ENCODE measurements at regions of chr1 and their contacts with region 1.

Region 1: GRCh38 chr1:203290261-203291089 is 14.8 kb upstream of the BTG2 start:
- DNase-seq: peak; percentile 99
- H3K4me3 Mint-ChIP-seq: peak overlapping the region; percentile 82
- H3K27ac Mint-ChIP-seq: peak overlapping the region; percentile 100
- H3K4me1 Mint-ChIP-seq: peaks cover 76% of the 10 kb centered on the region
- H3K27me3 Mint-ChIP-seq: peaks cover 2% of the 10 kb centered on the region

Region 2: GRCh38 chr1:203273206-203273868 is 17.1 kb before region 1 on chr1:
- CTCF ChIA-PET with region 1: interaction called, 356 read pairs
- POLR2A ChIA-PET with region 1: interaction called, 51 read pairs
- intact Hi-C with region 1: loop called (anchors 1 kb)
- DNase-seq: peak; percentile 95
- H3K4me3 Mint-ChIP-seq: peak overlapping the region; percentile 63
- H3K27ac Mint-ChIP-seq: peak overlapping the region; percentile 72
- H3K4me1 Mint-ChIP-seq: peaks cover 64% of the 10 kb centered on the region
- H3K27me3 Mint-ChIP-seq: no peaks in the 10 kb centered on the region

Region 3: DNA sequence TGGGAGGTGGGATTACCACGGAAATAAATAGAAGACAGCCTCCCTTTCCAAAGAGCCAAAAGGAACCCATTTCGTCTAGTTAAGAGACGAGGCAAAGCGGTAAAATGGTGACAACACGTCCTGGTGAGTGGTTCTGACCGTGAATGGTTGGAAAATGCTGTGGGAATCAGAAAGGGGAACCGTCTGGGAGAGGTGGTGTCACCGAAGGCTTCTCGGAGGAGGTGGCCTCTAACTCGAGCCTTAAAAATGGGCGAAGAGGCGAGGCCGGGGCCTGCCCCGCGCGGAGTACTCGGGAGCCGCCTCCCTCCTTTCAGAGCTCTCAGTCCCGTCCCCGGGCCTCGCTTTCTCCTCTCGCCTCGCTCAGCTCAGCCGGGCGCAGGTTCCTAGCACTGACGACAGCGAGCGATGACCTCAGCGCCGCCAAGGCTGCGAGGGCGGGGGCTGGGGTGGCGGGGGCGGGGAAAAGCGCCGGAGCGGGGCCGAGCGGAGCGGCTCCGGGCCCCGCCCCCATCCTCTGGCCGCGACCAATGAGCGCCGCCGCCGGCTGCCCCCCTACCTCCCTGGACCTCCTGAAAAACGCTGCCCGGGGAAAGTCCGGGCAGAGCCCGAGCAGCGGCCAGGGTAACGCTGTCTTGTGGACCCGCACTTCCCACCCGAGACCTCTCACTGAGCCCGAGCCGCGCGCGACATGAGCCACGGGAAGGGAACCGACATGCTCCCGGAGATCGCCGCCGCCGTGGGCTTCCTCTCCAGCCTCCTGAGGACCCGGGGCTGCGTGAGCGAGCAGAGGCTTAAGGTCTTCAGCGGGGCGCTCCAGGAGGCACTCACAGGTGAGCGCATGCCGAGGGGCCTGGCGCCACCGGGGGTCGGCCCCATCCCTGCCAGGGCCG is 14.7 kb after region 1 on chr1 and contains the start of gene BTG2:
- CTCF ChIA-PET with region 1: interaction called, 78 read pairs
- POLR2A ChIA-PET with region 1: interaction called, 204 read pairs
- intact Hi-C with region 1: loop called (anchors 1 kb)
- DNase-seq: peak; percentile 95
- H3K4me3 Mint-ChIP-seq: peak within 1 kb of the TSS; percentile 92
- H3K27ac Mint-ChIP-seq: peak within 1 kb of the TSS; percentile 98
- H3K4me1 Mint-ChIP-seq: peaks cover 51% of the 10 kb centered on the region
- H3K27me3 Mint-ChIP-seq: no peaks in the 10 kb centered on the region
- total RNA-seq, gene BTG2: 150 TPM

Region 4: GRCh38 chr1:203320591-203321272 is 30.3 kb after region 1 on chr1:
- CTCF ChIA-PET with region 1: interaction called, 44 read pairs
- POLR2A ChIA-PET with region 1: interaction called, 113 read pairs
- intact Hi-C with region 1: loop called (anchors 1 kb)
- DNase-seq: peak; percentile 78
- H3K4me3 Mint-ChIP-seq: peak overlapping the region; percentile 22
- H3K27ac Mint-ChIP-seq: peak overlapping the region; percentile 88
- H3K4me1 Mint-ChIP-seq: peaks cover 75% of the 10 kb centered on the region
- H3K27me3 Mint-ChIP-seq: no peaks in the 10 kb centered on the region

Region 5: GRCh38 chr1:203326830-203327683 is 36.6 kb after region 1 on chr1:
- CTCF ChIA-PET with region 1: interaction called, 44 read pairs
- POLR2A ChIA-PET with region 1: interaction called, 113 read pairs
- intact Hi-C with region 1: loop called (anchors 1 kb)
- DNase-seq: peak; percentile 96
- H3K4me3 Mint-ChIP-seq: peak overlapping the region; percentile 75
- H3K27ac Mint-ChIP-seq: peak overlapping the region; percentile 94
- H3K4me1 Mint-ChIP-seq: peaks cover 55% of the 10 kb centered on the region
- H3K27me3 Mint-ChIP-seq: no peaks in the 10 kb centered on the region

Region 6: GRCh38 chr1:204411451-204412204 is 1121.2 kb after region 1 on chr1 and contains the start of gene PPP1R15B:
- CTCF ChIA-PET with region 1: no interaction called
- POLR2A ChIA-PET with region 1: no interaction called
- intact Hi-C with region 1: loop called (anchors 10 kb)
- DNase-seq: peak; percentile 99
- H3K4me3 Mint-ChIP-seq: peak within 1 kb of the TSS; percentile 99
- H3K27ac Mint-ChIP-seq: peak within 1 kb of the TSS; percentile 98
- H3K4me1 Mint-ChIP-seq: peaks cover 12% of the 10 kb centered on the region
- H3K27me3 Mint-ChIP-seq: no peaks in the 10 kb centered on the region
- total RNA-seq, gene PPP1R15B: 54.9 to 57.1 TPM

Measured in activated CD4-positive, alpha-beta memory T cell treated with anti-CD3 and anti-CD28 coated beads for 36 hours (primary cell).